ENCODE measurements at regions of chr5 and their contacts with region 1.

Region 1: DNA sequence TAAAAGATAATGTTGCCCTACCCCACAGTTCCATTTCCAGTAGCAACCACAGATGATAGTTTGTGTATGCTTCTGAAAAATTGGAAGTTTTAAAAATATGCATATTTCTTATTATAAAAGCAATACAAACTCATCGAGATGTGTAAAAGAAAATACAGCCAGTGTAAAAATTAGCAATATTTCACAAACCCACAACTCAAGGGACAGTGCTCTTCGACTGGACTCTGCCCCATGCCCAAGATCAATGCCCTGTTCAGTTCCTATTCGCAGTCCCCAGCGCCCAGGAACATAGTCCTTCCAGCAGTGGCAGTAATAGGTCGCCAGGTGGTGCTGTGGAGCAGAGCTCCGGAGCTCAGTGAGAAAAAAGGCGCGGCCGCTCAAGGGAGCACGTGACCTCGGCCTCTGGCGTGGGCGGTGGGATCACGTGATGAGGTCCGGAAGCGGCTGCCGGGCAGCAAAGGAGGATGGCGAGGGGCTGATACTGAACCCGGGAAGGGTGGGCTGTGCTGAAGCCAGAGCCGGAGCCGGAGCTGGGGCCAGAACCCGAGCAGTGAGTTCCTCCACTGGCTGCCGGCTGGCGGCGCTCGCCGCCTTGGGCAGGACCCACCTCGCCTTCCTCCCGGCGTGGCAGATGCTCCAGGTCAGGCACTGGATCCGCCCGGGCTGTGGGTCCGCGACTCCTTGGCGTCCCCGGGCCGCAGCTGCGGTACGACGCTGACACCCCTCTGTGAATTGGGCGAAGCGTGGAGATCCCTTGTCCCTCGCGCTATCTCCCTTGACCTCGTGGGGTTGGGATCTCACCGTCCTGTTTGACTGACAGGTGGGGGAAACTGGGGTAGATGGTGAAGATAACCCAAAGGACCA is at the start of gene SLC36A1:
- DNase-seq: peak; percentile 87 to 99 (median 96)

Region 2: DNA sequence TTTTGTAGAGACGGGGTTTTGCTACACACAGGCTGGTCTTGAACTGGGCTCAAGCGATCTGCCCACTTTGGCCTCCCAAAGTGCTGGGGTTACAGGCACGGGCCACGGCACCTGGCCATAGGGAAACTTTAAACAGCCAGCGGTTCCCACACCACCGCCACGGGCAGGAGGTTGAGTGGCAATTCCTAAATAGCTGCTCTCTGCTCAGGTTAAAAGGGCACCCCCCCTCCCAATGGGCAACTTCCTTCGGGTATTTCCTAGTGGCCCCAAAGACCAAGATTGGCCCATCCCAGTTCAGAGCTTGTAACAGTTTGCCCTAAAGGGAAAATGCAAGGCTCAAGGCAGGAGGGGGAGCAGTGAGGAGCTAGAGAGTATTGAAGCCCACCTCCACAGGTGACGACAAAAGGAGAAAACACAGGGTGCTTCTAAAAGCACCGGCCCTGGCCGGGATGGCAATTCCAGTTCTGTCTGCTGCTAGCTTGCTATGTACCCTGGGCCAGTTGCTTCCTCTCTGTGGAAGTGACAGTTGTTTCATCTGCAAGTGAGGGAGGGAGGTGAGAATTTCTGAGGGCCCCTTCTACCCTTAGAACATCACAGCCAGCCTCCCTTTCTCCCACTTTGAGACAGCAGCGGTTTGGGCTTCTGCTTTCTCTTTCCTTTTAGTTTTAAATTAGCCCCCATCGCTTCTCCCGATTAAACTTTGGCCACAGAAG is 349.5 kb before region 1 on chr5:
- intact Hi-C with region 1: no loop called
- DNase-seq: no peak

Region 3: GRCh38 chr5:151252762-151253604 is 194.4 kb before region 1 on chr5 and contains the start of gene GM2A:
- intact Hi-C with region 1: loop called (anchors 5 kb)
- DNase-seq: peak; percentile 98 to 100 (median 99)

Region 4: GRCh38 chr5:151499501-151500035 is 52.2 kb after region 1 on chr5:
- intact Hi-C with region 1: loop called (anchors 1 kb)
- DNase-seq: no peak

Region 5: DNA sequence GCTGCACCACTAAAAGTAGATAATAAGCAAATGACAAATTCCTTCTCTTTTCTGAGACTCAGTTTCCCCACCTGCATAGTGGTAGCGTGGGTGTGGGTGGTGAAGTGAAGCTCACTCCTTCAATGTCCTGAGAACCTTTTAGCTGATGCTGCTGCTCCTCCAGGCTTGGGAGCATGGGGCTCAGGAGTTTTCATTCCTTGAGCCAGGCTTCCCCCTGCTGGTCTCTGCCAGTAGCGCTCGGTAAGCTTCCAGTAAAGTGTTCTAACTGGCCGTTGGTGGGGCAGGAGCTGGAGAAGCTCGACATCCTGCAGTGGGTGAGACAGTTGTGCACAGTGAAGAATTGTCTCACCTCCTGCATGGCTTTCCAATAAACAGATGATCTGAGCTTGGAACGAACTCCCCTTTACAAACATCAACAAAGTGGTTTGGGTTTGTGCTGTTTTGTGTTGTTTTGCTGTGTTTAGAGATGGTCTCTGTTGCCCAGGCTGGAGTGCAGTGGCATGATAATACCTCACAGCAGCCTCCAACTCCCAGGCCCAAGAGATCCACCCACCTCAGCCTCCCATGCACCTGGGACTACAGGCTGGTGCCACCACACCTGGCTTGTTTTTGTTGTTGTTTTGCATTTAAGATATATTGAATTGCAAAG is 204.7 kb after region 1 on chr5:
- intact Hi-C with region 1: loop called (anchors 1 kb)
- DNase-seq: peak; percentile 67 to 97 (median 84)

Region 6: DNA sequence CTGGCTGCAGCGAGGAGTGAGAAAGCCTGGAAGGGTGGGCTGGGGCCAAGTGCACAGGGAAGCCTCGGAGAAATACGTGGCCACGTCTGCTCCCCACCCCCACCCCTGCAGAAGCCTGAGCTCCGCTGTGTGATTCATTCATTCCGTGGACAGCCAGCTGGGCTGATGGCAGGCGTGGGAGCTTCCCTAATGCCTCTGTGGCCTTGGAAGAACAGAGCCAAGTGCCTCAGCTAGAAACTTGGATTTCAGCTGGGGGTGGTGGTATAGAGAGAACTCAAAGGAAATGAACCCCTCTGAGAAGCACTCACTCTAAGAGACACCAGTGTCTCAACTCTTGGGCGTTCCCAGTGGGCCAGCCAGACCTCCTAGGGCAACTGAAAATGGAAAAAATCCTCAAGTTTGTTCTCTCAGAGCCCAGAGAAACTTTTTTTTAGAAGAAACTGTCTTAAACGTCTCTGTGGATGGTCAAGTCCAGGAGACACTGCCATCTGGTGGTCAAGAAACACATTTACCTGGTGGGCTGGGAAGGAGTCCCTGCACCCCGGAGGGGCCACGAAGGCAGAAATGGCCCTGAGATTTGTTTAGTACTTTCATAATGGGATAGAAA is 293.0 kb after region 1 on chr5:
- intact Hi-C with region 1: loop called (anchors 2 kb)
- DNase-seq: peak in 5 of 10 donors; percentile 22 to 58 (median 47)

Measured in posterior cingulate gyrus (tissue), 11 donors.